H1 (cell line): ENCODE measurements at regions of chr14 and their contacts with region 1.

Region 1: DNA sequence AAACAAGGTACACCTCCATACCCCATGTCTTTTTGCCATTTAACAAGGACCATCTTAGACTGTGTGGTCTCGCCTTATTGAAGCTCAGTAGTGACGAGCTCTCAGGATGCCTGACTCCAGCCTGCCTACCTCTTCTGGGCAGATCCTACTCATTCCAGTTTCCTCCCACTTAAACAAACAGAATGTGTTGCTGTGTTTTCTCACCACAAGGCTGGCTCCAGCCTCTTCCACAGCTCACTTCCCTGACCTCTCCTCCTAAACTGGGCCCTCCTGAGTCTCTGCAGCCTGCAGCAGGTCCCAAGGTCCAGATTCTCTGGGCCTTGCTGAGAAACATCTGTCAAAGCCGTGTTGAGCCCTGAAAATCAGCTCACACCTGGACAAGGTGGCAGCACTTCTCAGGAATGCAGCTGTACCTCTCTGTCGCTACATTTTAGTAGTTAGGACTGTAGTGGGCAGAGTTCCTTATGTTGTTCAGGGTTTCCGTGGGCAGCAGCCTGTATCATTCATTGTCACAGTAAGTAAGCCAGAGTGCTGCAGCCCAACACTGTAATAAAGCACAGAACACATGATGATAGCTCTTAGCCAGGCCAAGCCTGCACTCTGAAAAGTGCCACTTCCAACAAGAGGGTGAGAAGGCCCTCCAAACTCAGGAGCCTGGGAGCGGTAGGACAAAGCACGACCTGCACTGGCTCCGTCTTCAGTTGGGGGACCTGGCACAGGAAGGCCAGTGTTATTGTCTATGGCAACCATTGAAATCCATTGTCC is 68.5 kb downstream of the NKX2-1 start:
- DNase-seq: no peak
- H3K4me3 ChIP-seq: no peak overlapping the region
- H3K27ac ChIP-seq: no peak overlapping the region
- H3K4me1 ChIP-seq: no peaks in the 10 kb centered on the region; a peak in 1 of 7 replicates
- H3K27me3 ChIP-seq: peaks cover 0 to 13% (median 3%) of the 10 kb centered on the region in 4 experiments; a peak in 5 of 7 replicates
- CTCF ChIP-seq: no peak
- EP300 ChIP-seq: no peak
- POLR2A ChIP-seq: no peak
- RAD21 ChIP-seq: no peak

Region 2: GRCh38 chr14:36439766-36440165 is 11.7 kb before region 1 on chr14:
- CTCF ChIA-PET with region 1: interaction called, 19 read pairs
- POLR2A ChIA-PET with region 1: interaction called, 3 read pairs
- DNase-seq: no peak
- H3K4me3 ChIP-seq: no peak overlapping the region
- H3K27ac ChIP-seq: no peak overlapping the region
- H3K4me1 ChIP-seq: peaks cover 2 to 19% (median 9%) of the 10 kb centered on the region in 4 experiments; a peak in 6 of 7 replicates
- H3K27me3 ChIP-seq: peaks cover 0 to 26% (median 12%) of the 10 kb centered on the region in 4 experiments; a peak in 5 of 7 replicates
- CTCF ChIP-seq: no peak
- EP300 ChIP-seq: no peak
- POLR2A ChIP-seq: no peak
- RAD21 ChIP-seq: no peak

Region 3: DNA sequence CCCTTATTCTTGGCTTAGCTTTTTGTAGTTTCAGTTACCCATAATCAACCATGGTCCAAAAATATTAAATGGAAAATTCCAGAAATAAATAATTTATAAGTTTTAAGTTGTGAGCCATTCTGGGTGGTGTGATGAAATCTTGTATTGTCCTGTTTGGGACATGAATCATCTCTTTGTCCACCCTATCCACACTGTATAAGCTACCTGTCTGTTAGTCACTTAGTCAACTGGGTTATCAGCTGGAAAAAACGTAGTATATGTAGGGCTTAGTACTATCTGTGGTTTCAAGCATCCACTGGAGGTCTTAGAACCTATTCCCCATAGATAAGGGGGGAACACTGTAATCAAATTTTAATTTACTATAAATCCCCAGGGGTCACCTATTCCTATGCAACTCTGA is 15.8 kb after region 1 on chr14:
- CTCF ChIA-PET with region 1: interaction called, 18 read pairs
- POLR2A ChIA-PET with region 1: interaction called, 4 read pairs
- DNase-seq: no peak
- H3K4me3 ChIP-seq: no peak overlapping the region
- H3K27ac ChIP-seq: no peak overlapping the region
- H3K4me1 ChIP-seq: no peaks in the 10 kb centered on the region
- H3K27me3 ChIP-seq: no peaks in the 10 kb centered on the region
- CTCF ChIP-seq: no peak
- EP300 ChIP-seq: no peak
- POLR2A ChIP-seq: no peak
- RAD21 ChIP-seq: no peak